ENCODE measurements at regions of chr3 and their contacts with region 1.

Region 1: GRCh38 chr3:48918388-48919214 is at the start of gene ARIH2:
- DNase-seq: peak; percentile 82 to 89 (median 88)
- ATAC-seq: peak; percentile 88
- H3K4me3 ChIP-seq: peak within 1 kb of the TSS; percentile 94
- H3K4me3 Mint-ChIP-seq: peak within 1 kb of the TSS; percentile 89 to 98 (median 96)
- H3K27ac ChIP-seq: peak within 1 kb of the TSS; percentile 98
- H3K27ac Mint-ChIP-seq: peak within 1 kb of the TSS; percentile 96 to 100 (median 99)
- H3K4me1 ChIP-seq: peaks cover 12 to 16% of the 10 kb centered on the region in 2 donors
- H3K4me1 Mint-ChIP-seq: peaks cover 7 to 31% (median 27%) of the 10 kb centered on the region in 7 donors
- H3K27me3 ChIP-seq: no peaks in the 10 kb centered on the region
- H3K27me3 Mint-ChIP-seq: no peaks in the 10 kb centered on the region
- total RNA-seq, gene ARIH2: 103 to 189 (median 150) TPM

Region 2: GRCh38 chr3:46976326-46977190 is 1942.0 kb before region 1 on chr3 and contains the start of gene CCDC12:
- CTCF ChIA-PET with region 1: no interaction called
- POLR2A ChIA-PET with region 1: no interaction called
- intact Hi-C with region 1: loop called in 1 of 2 experiments (anchors 10 kb)
- DNase-seq: peak; percentile 79 to 98 (median 96)
- ATAC-seq: peak; percentile 87
- H3K4me3 ChIP-seq: peak within 1 kb of the TSS; percentile 98
- H3K4me3 Mint-ChIP-seq: peak within 1 kb of the TSS; percentile 95 to 100 (median 99)
- H3K27ac ChIP-seq: peak within 1 kb of the TSS; percentile 90
- H3K27ac Mint-ChIP-seq: peak within 1 kb of the TSS; percentile 94 to 99 (median 98)
- H3K4me1 ChIP-seq: peaks cover 46 to 53% of the 10 kb centered on the region in 2 donors
- H3K4me1 Mint-ChIP-seq: peaks cover 44 to 82% (median 63%) of the 10 kb centered on the region in 7 donors
- H3K27me3 ChIP-seq: no peaks in the 10 kb centered on the region
- H3K27me3 Mint-ChIP-seq: no peaks in the 10 kb centered on the region
- total RNA-seq, gene CCDC12: 51.6 to 61.5 (median 56.9) TPM

Region 3: GRCh38 chr3:48685602-48686511 is 232.7 kb before region 1 on chr3 and contains the start of gene NCKIPSD:
- CTCF ChIA-PET with region 1: no interaction called
- POLR2A ChIA-PET with region 1: no interaction called
- intact Hi-C with region 1: loop called in 1 of 2 experiments (anchors 2 kb)
- DNase-seq: peak; percentile 83 to 96 (median 92)
- ATAC-seq: peak; percentile 97
- H3K4me3 ChIP-seq: peak within 1 kb of the TSS; percentile 92
- H3K4me3 Mint-ChIP-seq: peak within 1 kb of the TSS; percentile 88 to 95 (median 93)
- H3K27ac ChIP-seq: peak within 1 kb of the TSS; percentile 79
- H3K27ac Mint-ChIP-seq: peak within 1 kb of the TSS; percentile 73 to 94 (median 89)
- H3K4me1 ChIP-seq: peaks cover 8 to 18% of the 10 kb centered on the region in 2 donors
- H3K4me1 Mint-ChIP-seq: peaks cover 29 to 38% (median 33%) of the 10 kb centered on the region in 7 donors
- H3K27me3 ChIP-seq: no peaks in the 10 kb centered on the region
- H3K27me3 Mint-ChIP-seq: no peaks in the 10 kb centered on the region
- total RNA-seq, gene NCKIPSD: 13.7 to 42.1 (median 20.3) TPM

Region 4: GRCh38 chr3:48811524-48811923 is 107.1 kb before region 1 on chr3:
- CTCF ChIA-PET with region 1: no interaction called
- POLR2A ChIA-PET with region 1: interaction called, 3 read pairs
- intact Hi-C with region 1: loop called (anchors 1 kb)
- DNase-seq: no peak
- ATAC-seq: no peak
- H3K4me3 ChIP-seq: no peak overlapping the region
- H3K4me3 Mint-ChIP-seq: peak overlapping the region in 5 of 10 donors; percentile 16 to 51 (median 33)
- H3K27ac ChIP-seq: peak overlapping the region; percentile 64
- H3K27ac Mint-ChIP-seq: peak overlapping the region; percentile 64 to 97 (median 89)
- H3K4me1 ChIP-seq: peaks cover 16 to 18% of the 10 kb centered on the region in 2 donors
- H3K4me1 Mint-ChIP-seq: peaks cover 22 to 47% (median 40%) of the 10 kb centered on the region in 7 donors
- H3K27me3 ChIP-seq: no peaks in the 10 kb centered on the region
- H3K27me3 Mint-ChIP-seq: no peaks in the 10 kb centered on the region

Region 5: DNA sequence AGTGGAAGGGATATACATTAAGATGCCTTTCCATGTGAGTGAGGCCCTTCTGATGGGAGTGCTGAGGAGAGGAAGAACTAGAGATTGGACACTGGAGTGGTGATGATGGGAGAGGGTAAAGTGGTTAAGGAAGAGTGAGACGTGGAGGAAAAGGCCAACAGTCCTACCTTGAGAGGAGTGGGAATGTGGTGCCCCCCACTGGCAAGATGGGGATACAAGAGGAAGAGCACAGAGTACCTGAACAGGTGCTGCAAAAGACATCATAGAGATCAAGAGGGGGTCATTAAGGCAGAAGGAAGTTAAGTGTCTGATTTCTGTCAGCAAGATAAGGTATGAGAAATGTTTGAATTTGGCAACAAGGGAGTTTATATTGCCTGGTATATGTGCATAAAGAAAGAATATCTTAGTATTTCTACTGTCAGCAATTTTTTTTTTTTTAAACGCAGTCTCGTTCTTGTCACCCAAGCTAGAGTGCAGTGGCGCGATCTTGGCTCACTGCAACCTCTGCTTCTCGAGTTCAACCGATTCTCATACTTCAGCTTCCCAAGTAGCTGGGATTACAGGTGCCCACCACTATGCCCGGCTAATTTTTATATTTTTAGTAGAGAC is 34.0 kb after region 1 on chr3:
- CTCF ChIA-PET with region 1: no interaction called
- POLR2A ChIA-PET with region 1: no interaction called
- intact Hi-C with region 1: loop called in 1 of 2 experiments (anchors 5 kb)
- DNase-seq: peak; percentile 21 to 52 (median 33)
- ATAC-seq: peak; percentile 79
- H3K4me3 ChIP-seq: no peak overlapping the region
- H3K4me3 Mint-ChIP-seq: no peak overlapping the region
- H3K27ac ChIP-seq: no peak overlapping the region
- H3K27ac Mint-ChIP-seq: peak overlapping the region in 3 of 9 donors; percentile 2 to 33 (median 13)
- H3K4me1 ChIP-seq: no peaks in the 10 kb centered on the region
- H3K4me1 Mint-ChIP-seq: peaks cover 13 to 35% (median 17%) of the 10 kb centered on the region in 7 donors
- H3K27me3 ChIP-seq: no peaks in the 10 kb centered on the region
- H3K27me3 Mint-ChIP-seq: no peaks in the 10 kb centered on the region

Region 6: DNA sequence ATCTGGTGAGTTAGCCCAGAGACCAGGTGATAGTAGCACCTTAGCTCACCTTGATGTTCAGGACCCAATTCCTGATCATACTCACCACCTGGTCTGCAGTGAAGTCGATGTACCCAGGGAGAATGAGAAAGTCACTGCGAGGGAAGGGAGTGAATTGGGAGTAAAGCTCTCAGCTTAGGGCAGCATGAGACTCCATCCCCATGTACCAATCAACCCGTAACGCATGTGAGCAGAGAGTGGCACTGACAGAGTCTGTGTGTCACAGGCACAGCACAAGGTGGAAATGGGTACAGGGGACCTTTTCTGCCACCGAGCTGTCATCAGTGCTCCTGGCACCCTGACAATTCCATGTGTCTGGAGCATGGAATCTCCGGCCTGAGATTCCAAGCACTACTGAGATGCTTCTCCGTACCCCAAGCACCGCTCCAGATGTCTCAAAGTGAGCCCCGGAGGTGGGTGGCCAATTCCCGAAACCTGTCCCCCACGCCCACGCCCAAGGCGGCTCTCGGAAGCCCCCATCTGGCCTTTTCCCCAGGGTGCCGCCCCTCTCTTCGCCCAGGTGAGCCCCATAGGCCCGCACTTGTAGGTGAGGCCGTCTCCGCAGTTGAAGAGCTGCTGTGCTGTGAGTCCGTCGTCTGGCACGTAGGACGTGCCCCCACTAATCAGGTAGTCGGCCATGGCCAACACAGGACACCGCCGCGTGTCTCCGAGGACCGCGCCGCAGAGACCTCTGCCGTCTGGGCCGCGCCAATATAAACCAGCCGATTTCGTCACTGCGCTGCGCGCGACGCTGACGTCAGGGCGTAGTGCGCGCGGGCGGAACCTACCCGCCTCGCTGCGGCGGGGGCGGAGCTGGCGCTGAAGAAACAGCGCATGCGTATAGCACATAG is 110.3 kb after region 1 on chr3 and contains the start of gene IMPDH2:
- CTCF ChIA-PET with region 1: no interaction called
- POLR2A ChIA-PET with region 1: interaction called, 11 read pairs
- intact Hi-C with region 1: loop called in 1 of 2 experiments (anchors 2 kb)
- DNase-seq: peak; percentile 89 to 95 (median 93)
- ATAC-seq: peak; percentile 97
- H3K4me3 ChIP-seq: peak within 1 kb of the TSS; percentile 74
- H3K4me3 Mint-ChIP-seq: peak within 1 kb of the TSS; percentile 86 to 96 (median 94)
- H3K27ac ChIP-seq: peak within 1 kb of the TSS; percentile 98
- H3K27ac Mint-ChIP-seq: peak within 1 kb of the TSS; percentile 92 to 100 (median 98)
- H3K4me1 ChIP-seq: peaks cover 10 to 11% of the 10 kb centered on the region in 2 donors
- H3K4me1 Mint-ChIP-seq: peaks cover 7 to 52% (median 34%) of the 10 kb centered on the region in 7 donors
- H3K27me3 ChIP-seq: no peaks in the 10 kb centered on the region
- H3K27me3 Mint-ChIP-seq: no peaks in the 10 kb centered on the region
- total RNA-seq, gene IMPDH2: 102 to 206 (median 121) TPM

Region 7: DNA sequence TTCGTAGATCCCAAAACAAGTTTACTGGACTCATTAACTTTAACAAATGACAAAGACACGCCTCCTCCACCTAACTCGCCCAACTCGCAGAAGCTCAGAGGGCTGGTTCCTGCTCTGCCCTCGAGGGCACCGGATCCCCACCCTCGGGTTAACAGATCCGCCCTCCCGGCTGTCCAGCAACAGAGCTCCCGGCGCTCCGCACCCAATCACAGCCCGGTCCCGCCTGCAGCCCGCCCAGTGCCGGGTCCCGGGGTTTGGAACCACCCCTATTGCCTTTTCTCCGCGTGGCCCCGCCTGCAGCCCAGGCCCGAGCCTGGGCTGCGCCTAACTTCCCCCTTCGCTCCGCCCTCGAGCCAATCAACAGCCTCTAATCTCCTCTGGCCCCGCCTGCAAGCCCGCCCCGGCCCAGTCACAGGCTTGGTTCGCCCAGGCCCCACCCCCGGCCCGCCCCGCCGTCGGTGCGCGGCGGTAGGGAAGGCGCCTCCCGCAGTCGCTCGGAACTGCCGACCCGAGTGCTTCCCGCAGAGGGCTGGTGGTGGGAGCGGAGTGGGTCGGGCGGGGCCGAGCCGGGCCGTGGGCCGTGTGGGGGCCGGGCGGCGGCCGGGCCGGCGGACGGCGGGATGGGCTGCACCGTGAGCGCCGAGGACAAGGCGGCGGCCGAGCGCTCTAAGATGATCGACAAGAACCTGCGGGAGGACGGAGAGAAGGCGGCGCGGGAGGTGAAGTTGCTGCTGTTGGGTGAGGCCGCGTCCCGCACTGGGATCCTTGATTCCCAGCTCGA is 1317.3 kb after region 1 on chr3 and contains the start of gene GNAI2:
- CTCF ChIA-PET with region 1: no interaction called
- POLR2A ChIA-PET with region 1: no interaction called
- intact Hi-C with region 1: loop called in 1 of 2 experiments (anchors 5 kb)
- DNase-seq: peak; percentile 95 to 99 (median 99)
- ATAC-seq: peak; percentile 93
- H3K4me3 ChIP-seq: peak within 1 kb of the TSS; percentile 90
- H3K4me3 Mint-ChIP-seq: peak within 1 kb of the TSS; percentile 92 to 99 (median 98)
- H3K27ac ChIP-seq: peak within 1 kb of the TSS; percentile 84
- H3K27ac Mint-ChIP-seq: peak within 1 kb of the TSS; percentile 87 to 97 (median 95)
- H3K4me1 ChIP-seq: peaks cover 30 to 35% of the 10 kb centered on the region in 2 donors
- H3K4me1 Mint-ChIP-seq: peaks cover 12 to 41% (median 37%) of the 10 kb centered on the region in 7 donors
- H3K27me3 ChIP-seq: no peaks in the 10 kb centered on the region
- H3K27me3 Mint-ChIP-seq: no peaks in the 10 kb centered on the region
- total RNA-seq, gene GNAI2: 225 to 442 (median 282) TPM

Measured in naive thymus-derived CD4-positive, alpha-beta T cell (primary cell).